CD8-positive, alpha-beta memory T cell (primary cell): ENCODE measurements at regions of chrX and their contacts with region 1.

Region 1: GRCh38 chrX:21745756-21746155 is 12.2 kb downstream of the SMPX start:
- DNase-seq: peak in 3 of 5 donors; percentile 2 to 6 (median 4)
- H3K4me3 ChIP-seq: no peak overlapping the region
- H3K4me3 Mint-ChIP-seq: no peak overlapping the region
- H3K27ac ChIP-seq: no peak overlapping the region
- H3K27ac Mint-ChIP-seq: no peak overlapping the region
- H3K4me1 ChIP-seq: no peaks in the 10 kb centered on the region
- H3K4me1 Mint-ChIP-seq: no peaks in the 10 kb centered on the region
- H3K27me3 ChIP-seq: no peaks in the 10 kb centered on the region
- H3K27me3 Mint-ChIP-seq: peaks cover 6 to 16% of the 10 kb centered on the region in 2 donors

Region 2: DNA sequence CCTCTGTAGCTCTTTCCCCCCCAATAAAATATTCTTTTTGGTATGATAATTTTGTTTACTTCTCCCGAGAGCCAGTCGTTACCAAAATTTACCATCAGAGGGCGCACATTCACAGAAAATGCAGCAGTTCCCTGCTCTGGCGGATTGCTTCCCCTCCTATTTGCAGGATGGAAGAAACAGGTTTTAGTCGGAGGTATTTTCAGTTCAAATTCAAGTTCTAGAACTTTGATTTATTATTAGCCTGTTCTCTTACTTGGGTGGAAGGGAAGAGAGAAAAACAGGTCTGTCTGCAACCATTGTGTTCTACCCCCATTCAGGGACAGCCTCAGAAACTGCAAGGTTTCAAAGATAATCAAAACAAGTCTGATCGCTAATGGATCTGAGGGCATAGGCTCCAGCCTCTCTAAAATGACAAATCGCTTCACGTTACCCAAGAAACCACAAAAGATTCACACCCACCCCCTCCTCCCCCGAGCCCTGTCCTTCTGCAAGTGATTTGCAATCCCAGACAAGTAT is 1215.3 kb before region 1 on chrX:
- CTCF ChIA-PET with region 1: interaction called, 10 read pairs
- POLR2A ChIA-PET with region 1: no interaction called
- DNase-seq: peak; percentile 27 to 57 (median 36)
- H3K4me3 ChIP-seq: no peak overlapping the region
- H3K4me3 Mint-ChIP-seq: peak overlapping the region in 2 of 7 donors; percentile 34 to 52
- H3K27ac ChIP-seq: no peak overlapping the region
- H3K27ac Mint-ChIP-seq: no peak overlapping the region
- H3K4me1 ChIP-seq: no peaks in the 10 kb centered on the region
- H3K4me1 Mint-ChIP-seq: peaks cover 4 to 16% (median 15%) of the 10 kb centered on the region in 3 donors
- H3K27me3 ChIP-seq: no peaks in the 10 kb centered on the region
- H3K27me3 Mint-ChIP-seq: peaks cover 13 to 30% of the 10 kb centered on the region in 2 donors

Region 3: GRCh38 chrX:21735038-21735767 is 10.6 kb before region 1 on chrX:
- CTCF ChIA-PET with region 1: no interaction called
- POLR2A ChIA-PET with region 1: no interaction called
- DNase-seq: no peak
- H3K4me3 ChIP-seq: no peak overlapping the region
- H3K4me3 Mint-ChIP-seq: no peak overlapping the region
- H3K27ac ChIP-seq: no peak overlapping the region
- H3K27ac Mint-ChIP-seq: no peak overlapping the region
- H3K4me1 ChIP-seq: no peaks in the 10 kb centered on the region
- H3K4me1 Mint-ChIP-seq: no peaks in the 10 kb centered on the region
- H3K27me3 ChIP-seq: no peaks in the 10 kb centered on the region
- H3K27me3 Mint-ChIP-seq: peaks cover 17 to 23% of the 10 kb centered on the region in 2 donors